ENCODE measurements at regions of chr5 and their contacts with region 1.

Region 1: DNA sequence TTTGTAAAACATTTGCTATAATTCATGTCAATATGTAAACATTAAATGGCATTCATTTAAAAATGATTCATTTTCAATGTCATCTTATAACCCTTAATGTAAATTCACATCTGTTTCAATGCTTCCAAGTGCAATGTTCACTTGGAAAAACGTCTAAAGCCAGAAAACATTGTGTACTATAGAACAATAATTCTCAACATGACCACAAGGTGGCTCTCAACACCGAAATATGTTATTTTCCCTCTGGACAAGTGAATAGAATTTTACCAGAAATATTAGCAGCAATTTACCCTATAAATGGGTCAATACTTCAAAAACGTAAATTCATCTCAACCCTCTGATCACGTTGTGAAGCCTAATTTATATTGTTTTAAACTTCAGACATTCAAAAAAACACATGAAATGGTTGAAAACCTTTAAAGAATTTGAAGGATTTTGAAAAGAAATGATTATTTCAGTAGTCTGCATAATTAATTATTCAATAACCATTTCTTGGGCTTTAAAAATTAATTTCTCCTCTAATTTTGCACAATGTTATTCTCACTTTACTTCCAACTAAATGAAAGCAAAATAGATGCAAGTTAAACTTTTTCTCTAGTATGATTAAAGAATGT is 11.0 kb downstream of the CDH10 start:
- DNase-seq: peak; percentile 56
- H3K4me3 ChIP-seq: no peak overlapping the region
- H3K27ac ChIP-seq: no peak overlapping the region
- H3K4me1 ChIP-seq: no peaks in the 10 kb centered on the region
- H3K27me3 ChIP-seq: no peaks in the 10 kb centered on the region

Region 2: GRCh38 chr5:23820765-23821471 is 812.9 kb before region 1 on chr5:
- in situ Hi-C with region 1: no loop called
- DNase-seq: peak; percentile 84
- H3K4me3 ChIP-seq: no peak overlapping the region
- H3K27ac ChIP-seq: no peak overlapping the region
- H3K4me1 ChIP-seq: no peaks in the 10 kb centered on the region
- H3K27me3 ChIP-seq: no peaks in the 10 kb centered on the region

Region 3: DNA sequence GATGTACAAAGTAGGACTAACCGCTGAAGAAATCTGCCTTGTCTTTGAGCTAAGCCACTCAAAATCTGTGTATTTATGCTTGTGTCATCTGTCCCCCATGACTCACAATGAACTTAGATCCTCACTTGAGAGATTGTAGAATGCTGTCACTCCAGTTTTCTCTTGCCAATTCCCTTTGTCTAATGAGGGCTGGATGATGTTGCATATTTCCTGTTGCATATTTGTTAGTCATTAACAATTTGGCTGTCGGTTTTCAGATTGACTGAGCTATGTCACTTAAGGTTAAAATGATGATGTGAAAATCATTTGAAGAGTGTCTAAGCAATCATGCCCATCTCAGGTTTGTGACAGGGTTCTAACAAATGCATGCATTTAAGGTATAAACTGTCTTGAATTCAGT is 470.7 kb before region 1 on chr5:
- in situ Hi-C with region 1: no loop called
- DNase-seq: peak; percentile 67
- H3K4me3 ChIP-seq: no peak overlapping the region
- H3K27ac ChIP-seq: 0 out of 2 replicates have a peak overlapping the region, but pooled peaks have one; percentile 11
- H3K4me1 ChIP-seq: peaks cover 30% of the 10 kb centered on the region
- H3K27me3 ChIP-seq: no peaks in the 10 kb centered on the region

Region 4: DNA sequence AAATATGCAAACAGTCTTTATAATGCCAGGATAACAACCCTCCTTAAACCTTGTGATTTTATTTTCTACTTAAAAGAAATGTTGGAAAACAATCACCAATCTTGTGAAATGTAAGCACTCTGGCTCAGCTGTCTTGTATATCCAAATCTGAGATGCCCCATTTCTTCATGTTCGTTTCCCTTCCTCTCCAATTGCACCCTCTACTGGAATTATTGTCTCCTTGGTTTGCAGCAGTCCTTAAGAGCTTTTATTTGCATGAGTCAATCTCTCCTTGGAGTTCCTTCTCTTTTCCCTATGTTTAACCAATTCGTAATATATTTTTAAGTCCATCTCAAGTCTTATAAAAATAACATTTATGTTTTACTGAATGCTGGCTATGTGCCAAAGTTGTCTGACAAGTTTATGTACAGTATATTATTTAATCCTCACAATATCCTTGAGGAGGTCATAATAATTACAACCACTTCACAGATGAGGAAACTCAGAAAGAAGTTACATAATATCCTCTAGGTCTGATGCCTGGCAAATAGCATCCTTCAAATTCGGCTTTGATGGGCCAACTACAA is 373.0 kb after region 1 on chr5:
- in situ Hi-C with region 1: loop called (anchors 10 kb)
- DNase-seq: peak; percentile 82
- H3K4me3 ChIP-seq: no peak overlapping the region
- H3K27ac ChIP-seq: no peak overlapping the region
- H3K4me1 ChIP-seq: 0 out of 2 replicates have a peak, but pooled peaks cover 7% of the 10 kb centered on the region
- H3K27me3 ChIP-seq: no peaks in the 10 kb centered on the region

Measured in GM23248 (cell line).